T-cell (primary cell): ENCODE measurements at regions of chr6 and their contacts with region 1.

Region 1: GRCh38 chr6:15389084-15389764 is 143.4 kb downstream of the JARID2 start:
- DNase-seq: no peak
- ATAC-seq: peak in 1 of 4 experiments; percentile 43
- H3K4me3 ChIP-seq: no peak overlapping the region
- H3K4me3 Mint-ChIP-seq: peak overlapping the region in 1 of 3 donors; percentile 26
- H3K27ac ChIP-seq: no peak overlapping the region
- H3K27ac Mint-ChIP-seq: peak overlapping the region in 1 of 2 donors; percentile 37
- H3K4me1 ChIP-seq: peaks cover 40 to 49% of the 10 kb centered on the region in 2 experiments
- H3K4me1 Mint-ChIP-seq: peaks cover 68 to 88% (median 80%) of the 10 kb centered on the region in 3 donors
- H3K27me3 ChIP-seq: no peaks in the 10 kb centered on the region
- H3K27me3 Mint-ChIP-seq: no peaks in the 10 kb centered on the region

Region 2: GRCh38 chr6:15218401-15218800 is 170.8 kb before region 1 on chr6:
- CTCF ChIA-PET with region 1: no interaction called
- POLR2A ChIA-PET with region 1: no interaction called
- DNase-seq: no peak
- ATAC-seq: no peak
- H3K4me3 ChIP-seq: no peak overlapping the region
- H3K4me3 Mint-ChIP-seq: no peak overlapping the region
- H3K27ac ChIP-seq: no peak overlapping the region
- H3K27ac Mint-ChIP-seq: no peak overlapping the region
- H3K4me1 ChIP-seq: no peaks in the 10 kb centered on the region
- H3K4me1 Mint-ChIP-seq: no peaks in the 10 kb centered on the region
- H3K27me3 ChIP-seq: peaks cover 0 to 3% of the 10 kb centered on the region in 2 experiments
- H3K27me3 Mint-ChIP-seq: no peaks in the 10 kb centered on the region

Region 3: DNA sequence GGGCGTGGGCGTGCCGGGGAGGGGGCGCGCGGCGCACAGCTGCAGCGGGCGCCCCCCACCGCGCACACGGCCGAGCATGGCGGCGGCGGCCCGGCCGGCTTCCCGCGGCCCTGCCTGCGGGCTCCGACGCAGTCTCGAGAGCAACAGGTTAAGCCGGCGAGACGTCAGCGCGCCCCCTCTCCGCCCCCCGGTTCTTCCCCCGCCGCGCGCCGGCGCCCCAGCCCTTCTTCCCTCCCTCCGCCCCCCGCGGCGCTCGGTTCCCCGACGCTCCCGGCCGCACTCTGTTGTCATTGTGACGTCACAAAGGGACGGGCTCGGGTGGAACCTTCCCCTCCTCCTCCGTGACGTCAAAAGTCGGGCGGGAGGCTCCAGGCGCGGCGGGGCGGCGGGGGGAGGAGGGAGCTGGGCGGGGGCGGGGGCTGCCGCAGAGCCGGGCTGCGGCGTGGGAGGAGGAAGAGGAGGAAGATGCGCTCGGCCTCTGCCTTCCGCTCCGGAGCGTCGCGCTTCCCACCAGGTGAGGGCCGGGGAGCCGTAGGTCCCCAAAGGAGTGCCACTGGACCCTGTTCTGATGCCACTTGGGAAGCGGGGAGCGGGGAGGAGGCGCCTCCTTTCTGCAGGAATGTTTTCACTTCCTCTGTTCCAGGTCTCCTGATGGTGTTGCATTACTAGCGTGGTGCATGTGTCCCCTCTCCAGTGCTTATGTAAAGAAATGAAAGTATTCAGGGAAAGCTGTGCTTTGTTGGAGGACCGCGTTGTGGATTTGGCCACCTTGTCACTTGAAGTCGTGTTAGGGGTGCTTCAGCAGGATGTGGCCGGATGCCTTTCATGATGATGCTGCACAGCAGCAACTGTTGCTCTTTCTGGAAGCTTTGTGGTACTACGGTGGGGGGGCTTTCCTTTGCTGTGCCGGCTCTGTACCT is 140.5 kb before region 1 on chr6:
- CTCF ChIA-PET with region 1: interaction called in 1 of 2 experiments, 10 read pairs
- POLR2A ChIA-PET with region 1: no interaction called
- DNase-seq: peak; percentile 74 to 100 (median 97)
- ATAC-seq: peak; percentile 44 to 61 (median 48)
- H3K4me3 ChIP-seq: peak overlapping the region; percentile 72 to 84
- H3K4me3 Mint-ChIP-seq: peak overlapping the region; percentile 91 to 99 (median 98)
- H3K27ac ChIP-seq: peak overlapping the region; percentile 98
- H3K27ac Mint-ChIP-seq: peak overlapping the region; percentile 97 to 98
- H3K4me1 ChIP-seq: peaks cover 28 to 39% of the 10 kb centered on the region in 2 experiments
- H3K4me1 Mint-ChIP-seq: peaks cover 58 to 71% (median 61%) of the 10 kb centered on the region in 3 donors
- H3K27me3 ChIP-seq: peaks cover 0 to 3% of the 10 kb centered on the region in 2 experiments
- H3K27me3 Mint-ChIP-seq: no peaks in the 10 kb centered on the region

Region 4: GRCh38 chr6:16770701-16771569 is 1381.7 kb after region 1 on chr6:
- CTCF ChIA-PET with region 1: no interaction called
- POLR2A ChIA-PET with region 1: interaction called in 1 of 2 experiments, 13 read pairs
- DNase-seq: peak; percentile 41 to 89 (median 71)
- ATAC-seq: peak; percentile 74 to 81 (median 77)
- H3K4me3 ChIP-seq: no peak overlapping the region
- H3K4me3 Mint-ChIP-seq: peak overlapping the region in 2 of 3 donors; percentile 9 to 26
- H3K27ac ChIP-seq: no peak overlapping the region
- H3K27ac Mint-ChIP-seq: peak overlapping the region; percentile 42 to 65
- H3K4me1 ChIP-seq: peaks cover 12 to 28% of the 10 kb centered on the region in 2 experiments
- H3K4me1 Mint-ChIP-seq: peaks cover 45 to 57% (median 45%) of the 10 kb centered on the region in 3 donors
- H3K27me3 ChIP-seq: no peaks in the 10 kb centered on the region
- H3K27me3 Mint-ChIP-seq: no peaks in the 10 kb centered on the region